Heart left ventricle (tissue), 16 donors: ENCODE measurements at regions of chr4 and their contacts with region 1.

Region 1: GRCh38 chr4:184733654-184734524 is at the start of gene CENPU:
- DNase-seq: peak; percentile 96 to 98 (median 97)
- ATAC-seq: peak; percentile 99 to 100 (median 100)
- H3K4me3 ChIP-seq: peak within 1 kb of the TSS; percentile 45 to 94 (median 71)
- H3K27ac ChIP-seq: peak within 1 kb of the TSS in 11 of 12 donors; percentile 45 to 82 (median 62)
- H3K4me1 ChIP-seq: peaks cover 0 to 20% (median 11%) of the 10 kb centered on the region in 12 donors
- H3K27me3 ChIP-seq: no peaks in the 10 kb centered on the region
- CTCF ChIP-seq: peak in 1 of 12 donors; percentile 3
- POLR2A ChIP-seq: peak in 1 of 2 donors; percentile 73
- total RNA-seq, gene CENPU: 0.36 to 7.1 (median 1.3) TPM

Region 2: GRCh38 chr4:183444214-183445066 is 1289.4 kb before region 1 on chr4 and contains the start of gene CDKN2AIP:
- intact Hi-C with region 1: loop called in 1 of 10 experiments (anchors 10 kb)
- DNase-seq: peak; percentile 94 to 97 (median 95)
- ATAC-seq: peak; percentile 87 to 96 (median 94)
- H3K4me3 ChIP-seq: peak within 1 kb of the TSS; percentile 70 to 98 (median 90)
- H3K27ac ChIP-seq: peak within 1 kb of the TSS; percentile 97 to 99 (median 99)
- H3K4me1 ChIP-seq: peaks cover 8 to 55% (median 41%) of the 10 kb centered on the region in 12 donors
- H3K27me3 ChIP-seq: no peaks in the 10 kb centered on the region
- CTCF ChIP-seq: peak in 5 of 12 donors; percentile 5 to 40 (median 13)
- POLR2A ChIP-seq: peak in 1 of 2 donors; percentile 99
- total RNA-seq, gene CDKN2AIP: 8.0 to 12.5 (median 9.7) TPM

Region 3: DNA sequence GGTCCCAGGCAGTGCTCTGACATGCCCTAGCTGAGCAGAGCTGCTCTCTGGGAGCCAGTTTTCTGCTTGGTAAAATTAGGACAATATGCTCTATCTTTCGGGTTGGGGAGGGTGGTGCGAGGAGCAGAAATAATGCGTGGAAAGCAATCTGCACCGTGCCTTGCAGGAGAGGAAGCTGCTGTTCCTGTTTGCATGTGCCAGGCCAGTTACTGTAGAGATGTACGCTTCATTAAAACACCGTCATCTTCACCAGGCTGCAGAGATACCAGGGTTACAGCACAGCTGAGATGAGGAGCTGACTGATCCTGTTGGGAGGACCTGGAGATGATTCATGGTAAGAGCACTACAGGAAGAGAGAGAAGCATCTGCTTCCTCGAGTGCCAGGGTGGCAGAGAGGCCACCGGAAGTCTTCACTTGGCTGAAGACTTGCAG is 230.0 kb before region 1 on chr4:
- intact Hi-C with region 1: no loop called
- DNase-seq: no peak
- ATAC-seq: peak in 1 of 4 donors; percentile 68
- H3K4me3 ChIP-seq: no peak overlapping the region
- H3K27ac ChIP-seq: peak overlapping the region in 1 of 12 donors; percentile 32
- H3K4me1 ChIP-seq: peaks cover 0 to 29% (median 0%) of the 10 kb centered on the region in 12 donors
- H3K27me3 ChIP-seq: no peaks in the 10 kb centered on the region
- CTCF ChIP-seq: no peak
- POLR2A ChIP-seq: no peak

Region 4: DNA sequence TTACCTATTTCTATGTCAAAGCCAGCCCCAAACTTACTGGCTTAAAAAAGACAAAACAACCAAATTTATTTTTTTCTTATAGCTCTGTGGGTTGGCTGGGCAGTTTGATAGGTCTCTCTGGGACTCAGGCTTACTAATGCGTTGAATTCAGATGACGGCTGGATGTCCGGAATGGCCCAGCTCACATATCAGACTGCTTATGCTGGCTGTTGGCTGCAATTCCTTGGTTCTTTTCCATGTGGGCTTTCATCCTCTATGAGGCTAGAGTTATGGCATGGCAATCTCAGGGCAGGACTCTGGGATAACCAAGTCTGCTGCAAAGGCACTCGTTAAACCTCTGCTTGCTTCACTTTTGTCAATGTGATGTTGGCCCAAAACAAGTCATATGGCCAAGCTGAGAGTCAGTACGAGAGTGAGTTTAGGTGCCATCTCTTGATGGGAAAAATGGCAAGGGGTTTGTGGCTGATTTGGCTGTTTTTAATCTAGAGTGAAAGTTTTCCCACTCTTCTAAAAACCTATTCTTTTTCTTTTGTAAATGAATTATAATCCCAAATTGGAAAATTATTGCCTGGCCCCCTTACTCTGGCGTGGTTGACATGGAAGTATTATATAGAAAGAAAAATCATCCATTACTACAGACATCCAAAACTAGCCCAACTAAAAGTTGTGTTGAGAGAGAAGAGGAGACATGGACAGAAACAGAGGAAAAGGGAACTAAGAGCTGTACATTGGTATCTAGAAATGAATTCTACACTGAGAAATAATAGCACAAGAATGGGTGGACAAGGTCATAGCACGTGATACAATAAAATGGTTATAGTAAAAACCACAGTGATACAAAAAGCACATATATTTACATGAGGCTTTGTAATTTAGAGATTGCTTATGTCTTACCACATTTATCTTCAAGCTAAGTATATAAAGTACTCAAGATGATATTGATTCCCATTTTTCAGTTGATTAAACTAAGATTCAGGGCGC is 77.7 kb before region 1 on chr4:
- intact Hi-C with region 1: loop called in 1 of 10 experiments (anchors 5 kb)
- DNase-seq: peak in 4 of 5 donors; percentile 51 to 60 (median 55)
- ATAC-seq: peak; percentile 86 to 97 (median 94)
- H3K4me3 ChIP-seq: no peak overlapping the region
- H3K27ac ChIP-seq: peak overlapping the region in 11 of 12 donors; percentile 11 to 73 (median 56)
- H3K4me1 ChIP-seq: peaks cover 0 to 19% (median 0%) of the 10 kb centered on the region in 12 donors
- H3K27me3 ChIP-seq: no peaks in the 10 kb centered on the region
- CTCF ChIP-seq: no peak
- POLR2A ChIP-seq: no peak